ENCODE measurements at regions of chr11 and their contacts with region 1.

Region 1: DNA sequence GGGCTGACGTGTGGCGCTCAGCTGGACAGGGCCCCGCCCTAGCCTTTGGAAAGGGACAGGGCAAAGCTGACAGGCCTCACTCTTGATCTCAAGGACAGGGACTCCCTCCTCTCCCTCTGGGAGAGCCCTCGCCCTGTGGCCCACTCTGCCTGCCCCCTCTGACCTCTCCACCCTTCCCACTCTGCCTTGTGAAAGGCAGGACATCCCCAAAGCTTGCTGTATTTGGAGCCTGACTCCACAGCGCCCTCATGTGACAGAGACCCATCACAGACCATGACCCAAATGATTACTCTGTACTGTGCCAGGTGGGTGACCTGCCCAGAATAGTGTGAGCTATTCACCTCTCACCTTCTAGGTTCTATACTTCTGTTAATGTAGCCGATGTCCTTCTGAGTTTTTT is 18.8 kb downstream of the P2RY2 start:
- DNase-seq: peak; percentile 65 to 66
- H3K4me3 ChIP-seq: no peak overlapping the region
- H3K27ac ChIP-seq: no peak overlapping the region
- H3K4me1 ChIP-seq: peaks cover 48% of the 10 kb centered on the region
- H3K27me3 ChIP-seq: no peaks in the 10 kb centered on the region
- CTCF ChIP-seq: peak; percentile 89

Region 2: GRCh38 chr11:72924568-72925190 is 312.2 kb before region 1 on chr11:
- CTCF ChIA-PET with region 1: no interaction called
- POLR2A ChIA-PET with region 1: no interaction called
- intact Hi-C with region 1: loop called (anchors 5 kb)
- DNase-seq: peak in 1 of 2 experiments; percentile 37
- H3K4me3 ChIP-seq: no peak overlapping the region
- H3K27ac ChIP-seq: no peak overlapping the region
- H3K4me1 ChIP-seq: no peaks in the 10 kb centered on the region
- H3K27me3 ChIP-seq: no peaks in the 10 kb centered on the region
- CTCF ChIP-seq: peak; percentile 70

Region 3: GRCh38 chr11:73095613-73096012 is 141.2 kb before region 1 on chr11:
- CTCF ChIA-PET with region 1: no interaction called
- POLR2A ChIA-PET with region 1: no interaction called
- intact Hi-C with region 1: no loop called
- DNase-seq: no peak
- H3K4me3 ChIP-seq: no peak overlapping the region
- H3K27ac ChIP-seq: no peak overlapping the region
- H3K4me1 ChIP-seq: no peaks in the 10 kb centered on the region
- H3K27me3 ChIP-seq: no peaks in the 10 kb centered on the region
- CTCF ChIP-seq: no peak

Region 4: DNA sequence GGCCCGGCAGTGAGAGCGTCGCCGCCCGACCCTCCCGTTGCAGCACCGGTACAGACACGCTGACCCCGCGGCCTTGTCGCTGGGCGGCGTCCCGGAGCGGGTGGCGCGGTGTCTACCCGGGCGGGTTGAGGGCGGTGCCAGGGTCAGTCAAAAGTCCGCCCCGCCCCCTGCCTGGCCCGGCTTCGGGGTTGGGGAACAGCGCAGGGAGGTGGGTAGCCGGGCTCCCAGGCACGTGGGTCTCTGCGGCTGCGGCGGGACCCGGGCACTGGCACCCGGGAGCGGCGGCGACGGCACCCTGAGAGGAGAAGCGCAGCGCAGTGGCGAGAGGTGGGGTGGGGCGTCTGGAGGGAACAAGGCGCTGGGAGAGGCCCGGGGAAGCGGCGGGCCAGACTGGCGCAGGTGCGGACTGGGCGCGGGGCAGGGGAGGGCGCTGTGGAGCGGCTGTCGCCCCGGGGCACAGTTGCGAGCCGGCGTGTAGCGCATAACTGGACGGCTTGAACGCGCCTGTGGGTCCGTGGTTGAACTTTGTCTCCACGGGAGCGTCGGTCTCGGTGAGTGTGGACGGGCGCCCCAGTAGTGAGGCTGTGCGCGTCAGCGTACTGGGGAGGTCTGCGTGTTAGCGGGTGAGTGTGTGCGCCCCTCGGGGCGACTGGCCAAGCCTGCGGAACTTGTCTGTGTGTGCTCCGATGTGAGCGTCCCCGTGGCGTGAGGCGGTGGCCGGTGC is 18.6 kb before region 1 on chr11 and contains the start of gene P2RY2:
- CTCF ChIA-PET with region 1: interaction called, 3 read pairs
- POLR2A ChIA-PET with region 1: no interaction called
- intact Hi-C with region 1: loop called (anchors 1 kb)
- DNase-seq: peak; percentile 73 to 93
- H3K4me3 ChIP-seq: peak within 1 kb of the TSS; percentile 69
- H3K27ac ChIP-seq: peak within 1 kb of the TSS; percentile 46
- H3K4me1 ChIP-seq: peaks cover 44% of the 10 kb centered on the region
- H3K27me3 ChIP-seq: no peaks in the 10 kb centered on the region
- CTCF ChIP-seq: peak; percentile 64
- total RNA-seq, gene P2RY2: 19.8 and 22.5 TPM in 2 replicates

Region 5: DNA sequence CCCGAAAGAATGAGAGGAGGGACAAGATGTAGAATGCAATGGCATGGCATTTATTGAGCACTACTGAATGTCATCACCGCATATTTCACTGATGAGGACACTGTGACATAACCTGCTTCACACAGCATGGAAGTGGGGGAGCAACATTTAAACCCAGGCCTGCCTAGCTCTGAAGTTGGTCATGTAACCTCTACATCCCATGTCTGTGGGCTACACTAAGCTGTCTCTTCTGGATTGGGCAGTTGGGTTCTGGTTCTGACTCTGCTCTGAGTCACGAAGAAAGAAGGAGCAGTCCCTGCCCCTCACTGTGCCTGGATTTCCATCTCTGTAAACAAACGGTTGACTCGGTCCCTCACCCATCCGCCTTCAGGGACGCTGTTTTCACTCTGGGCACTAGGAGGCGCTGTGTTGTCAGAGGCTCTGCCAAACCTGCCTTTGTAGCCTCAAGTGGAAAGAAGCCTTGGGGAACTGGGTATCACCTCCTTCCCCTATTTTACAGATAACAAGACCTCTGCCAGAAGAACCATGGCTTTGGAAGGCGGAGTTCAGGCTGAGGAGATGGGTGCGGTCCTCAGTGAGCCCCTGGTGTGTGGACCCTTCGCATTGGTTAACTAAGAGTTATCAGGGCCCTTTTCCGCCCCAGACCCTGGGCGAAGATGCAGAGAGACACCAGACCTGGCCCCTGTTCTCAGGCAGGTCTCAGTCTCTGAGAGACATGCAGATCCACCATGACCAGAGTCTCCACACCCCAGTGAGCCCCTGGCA is 58.6 kb after region 1 on chr11:
- CTCF ChIA-PET with region 1: no interaction called
- POLR2A ChIA-PET with region 1: no interaction called
- intact Hi-C with region 1: no loop called
- DNase-seq: peak; percentile 47 to 73
- H3K4me3 ChIP-seq: no peak overlapping the region
- H3K27ac ChIP-seq: peak overlapping the region; percentile 45; the same call in 1 of the 2 replicates
- H3K4me1 ChIP-seq: peaks cover 9% of the 10 kb centered on the region
- H3K27me3 ChIP-seq: no peaks in the 10 kb centered on the region
- CTCF ChIP-seq: peak; percentile 98

Measured in PC-9 (cell line).